ENCODE measurements at regions of chr3 and their contacts with region 1.

Region 1: GRCh38 chr3:115169808-115170207 is 22.7 kb upstream of the ZBTB20 start:
- DNase-seq: no peak
- H3K4me3 Mint-ChIP-seq: no peak overlapping the region
- H3K27ac Mint-ChIP-seq: no peak overlapping the region
- H3K4me1 Mint-ChIP-seq: peaks cover 12% of the 10 kb centered on the region
- H3K27me3 Mint-ChIP-seq: no peaks in the 10 kb centered on the region

Region 2: DNA sequence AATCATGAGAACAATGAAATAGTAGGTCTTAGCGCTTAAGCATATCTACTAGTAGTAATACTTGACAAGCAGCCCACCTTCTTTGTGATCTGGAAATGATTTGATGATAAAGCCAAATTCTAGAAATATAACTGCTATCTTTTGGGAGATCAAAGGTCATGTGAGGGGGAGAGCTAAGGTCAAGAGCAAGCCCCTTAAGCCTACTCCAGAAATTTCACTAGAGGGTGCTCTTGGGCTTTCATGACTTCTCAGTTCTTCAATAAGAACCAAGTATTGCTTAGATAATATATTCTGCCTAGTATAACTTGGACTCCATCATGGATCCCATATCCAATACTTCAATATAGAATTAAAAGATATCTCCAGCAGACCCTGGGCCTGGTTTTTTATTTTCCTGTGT is 342.3 kb before region 1 on chr3:
- CTCF ChIA-PET with region 1: interaction called, 6 read pairs
- POLR2A ChIA-PET with region 1: no interaction called
- intact Hi-C with region 1: loop called (anchors 1 kb)
- DNase-seq: no peak
- H3K4me3 Mint-ChIP-seq: no peak overlapping the region
- H3K27ac Mint-ChIP-seq: no peak overlapping the region
- H3K4me1 Mint-ChIP-seq: peaks cover 4% of the 10 kb centered on the region
- H3K27me3 Mint-ChIP-seq: no peaks in the 10 kb centered on the region

Region 3: DNA sequence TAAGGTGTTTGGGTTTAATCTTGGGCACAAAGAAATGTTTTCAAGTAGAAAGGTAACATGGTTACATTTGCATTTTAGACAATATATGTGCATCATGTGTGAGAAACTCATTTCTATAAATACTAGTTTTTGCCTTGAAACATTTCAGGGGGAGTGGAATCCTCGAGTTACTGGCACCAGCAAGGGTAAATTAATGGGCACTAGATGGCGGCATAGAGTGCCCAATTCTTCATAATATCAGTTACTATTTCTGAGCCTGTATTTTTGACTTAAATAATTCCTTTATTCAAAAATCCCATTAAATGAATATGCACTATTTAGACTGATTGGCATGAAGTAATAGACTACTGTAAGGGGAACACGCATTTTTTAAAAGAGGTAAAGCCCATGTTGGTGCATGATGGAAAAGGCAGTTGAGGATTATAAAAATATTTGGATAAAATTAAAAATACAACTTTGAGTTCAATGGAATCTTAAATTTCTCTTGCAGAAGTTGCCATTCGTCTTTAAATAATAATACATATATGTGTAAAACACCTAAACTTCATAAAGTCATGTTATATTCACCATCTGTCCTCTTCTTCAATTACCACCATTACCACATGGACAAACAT is 129.0 kb before region 1 on chr3:
- CTCF ChIA-PET with region 1: interaction called, 4 read pairs
- POLR2A ChIA-PET with region 1: no interaction called
- intact Hi-C with region 1: loop called (anchors 2 kb)
- DNase-seq: peak; percentile 34
- H3K4me3 Mint-ChIP-seq: no peak overlapping the region
- H3K27ac Mint-ChIP-seq: no peak overlapping the region
- H3K4me1 Mint-ChIP-seq: peaks cover 2% of the 10 kb centered on the region
- H3K27me3 Mint-ChIP-seq: no peaks in the 10 kb centered on the region

Region 4: GRCh38 chr3:115139072-115139471 is 30.7 kb before region 1 on chr3:
- CTCF ChIA-PET with region 1: no interaction called
- POLR2A ChIA-PET with region 1: no interaction called
- intact Hi-C with region 1: no loop called
- DNase-seq: no peak
- H3K4me3 Mint-ChIP-seq: no peak overlapping the region
- H3K27ac Mint-ChIP-seq: no peak overlapping the region
- H3K4me1 Mint-ChIP-seq: peaks cover 28% of the 10 kb centered on the region
- H3K27me3 Mint-ChIP-seq: no peaks in the 10 kb centered on the region

Region 5: GRCh38 chr3:115478359-115478758 is 308.6 kb after region 1 on chr3:
- CTCF ChIA-PET with region 1: no interaction called
- POLR2A ChIA-PET with region 1: no interaction called
- intact Hi-C with region 1: no loop called
- DNase-seq: no peak
- H3K4me3 Mint-ChIP-seq: no peak overlapping the region
- H3K27ac Mint-ChIP-seq: no peak overlapping the region
- H3K4me1 Mint-ChIP-seq: no peaks in the 10 kb centered on the region
- H3K27me3 Mint-ChIP-seq: no peaks in the 10 kb centered on the region

Measured in activated CD4-positive, alpha-beta memory T cell treated with anti-CD3 and anti-CD28 coated beads for 36 hours (primary cell).